PC-9 (cell line): ENCODE measurements at regions of chr3 and their contacts with region 1.

Region 1: DNA sequence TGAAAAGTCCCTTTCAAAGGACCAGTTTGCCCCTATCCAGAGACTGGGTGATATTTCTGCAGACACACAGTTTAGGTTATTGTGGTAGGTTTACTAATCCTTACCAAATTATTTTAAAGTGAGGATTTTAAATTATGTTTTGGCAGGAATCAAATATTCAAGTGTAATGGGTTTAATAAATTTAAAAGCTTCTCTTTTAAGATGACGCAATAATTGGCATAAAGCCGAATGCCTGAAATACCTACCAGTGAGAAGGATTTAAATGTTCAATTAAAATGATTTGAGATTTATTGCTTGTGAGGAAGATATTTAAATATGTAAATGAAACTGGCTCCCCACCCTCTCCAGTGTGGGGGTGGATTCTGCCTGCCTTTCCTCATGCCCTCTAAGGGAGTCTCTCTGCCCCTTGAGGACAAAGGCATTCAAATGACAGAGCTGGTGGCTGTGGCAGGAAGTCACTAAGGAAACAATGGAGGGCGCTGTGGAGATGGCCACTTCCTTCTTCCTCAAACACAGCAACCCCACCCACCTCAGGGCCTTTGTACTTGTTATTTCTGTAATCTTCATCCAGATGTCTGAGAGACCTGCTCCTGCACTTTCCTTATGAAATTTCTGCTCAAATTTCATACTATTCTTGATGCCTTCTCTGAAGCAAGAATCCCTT is 131.7 kb downstream of the TNIK start:
- DNase-seq: peak; percentile 30 to 57
- H3K4me3 ChIP-seq: no peak overlapping the region
- H3K27ac ChIP-seq: no peak overlapping the region
- H3K4me1 ChIP-seq: peaks cover 34% of the 10 kb centered on the region
- H3K27me3 ChIP-seq: no peaks in the 10 kb centered on the region
- CTCF ChIP-seq: peak; percentile 24; the same call in 1 of the 2 replicates

Region 2: GRCh38 chr3:171306631-171307030 is 21.9 kb before region 1 on chr3:
- CTCF ChIA-PET with region 1: no interaction called
- POLR2A ChIA-PET with region 1: no interaction called
- intact Hi-C with region 1: loop called (anchors 2 kb)
- DNase-seq: no peak
- H3K4me3 ChIP-seq: no peak overlapping the region
- H3K27ac ChIP-seq: no peak overlapping the region
- H3K4me1 ChIP-seq: 0 out of 2 replicates have a peak, but pooled peaks cover 5% of the 10 kb centered on the region
- H3K27me3 ChIP-seq: no peaks in the 10 kb centered on the region
- CTCF ChIP-seq: no peak

Region 3: GRCh38 chr3:171347301-171348039 is 18.9 kb after region 1 on chr3:
- CTCF ChIA-PET with region 1: no interaction called
- POLR2A ChIA-PET with region 1: no interaction called
- intact Hi-C with region 1: loop called (anchors 2 kb)
- DNase-seq: peak in 1 of 2 experiments; percentile 78
- H3K4me3 ChIP-seq: no peak overlapping the region
- H3K27ac ChIP-seq: peak overlapping the region; percentile 51
- H3K4me1 ChIP-seq: peaks cover 51% of the 10 kb centered on the region
- H3K27me3 ChIP-seq: no peaks in the 10 kb centered on the region
- CTCF ChIP-seq: no peak

Region 4: DNA sequence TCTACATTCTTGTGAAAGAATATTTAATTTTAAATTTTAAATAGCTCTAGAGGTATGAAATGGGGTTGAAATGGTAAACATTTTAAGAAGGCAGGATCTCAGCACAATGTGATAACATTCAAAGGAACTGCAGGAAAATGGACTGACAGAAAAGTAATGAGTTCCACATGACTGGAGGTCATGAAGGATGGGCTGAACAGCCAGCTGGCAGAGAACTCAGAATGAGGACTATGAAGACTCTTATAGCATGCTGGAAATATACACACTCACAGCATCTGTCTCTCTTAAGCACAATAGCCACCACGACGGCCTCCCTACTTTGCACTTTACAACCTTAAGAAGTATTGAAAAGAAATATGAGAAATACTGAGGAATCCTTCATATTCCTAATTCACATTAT is 36.9 kb after region 1 on chr3:
- CTCF ChIA-PET with region 1: no interaction called
- POLR2A ChIA-PET with region 1: no interaction called
- intact Hi-C with region 1: no loop called
- DNase-seq: no peak
- H3K4me3 ChIP-seq: no peak overlapping the region
- H3K27ac ChIP-seq: no peak overlapping the region
- H3K4me1 ChIP-seq: no peaks in the 10 kb centered on the region; the same call in 1 of the 2 replicates
- H3K27me3 ChIP-seq: no peaks in the 10 kb centered on the region
- CTCF ChIP-seq: no peak